ENCODE measurements at regions of chr2 and their contacts with region 1.

Region 1: DNA sequence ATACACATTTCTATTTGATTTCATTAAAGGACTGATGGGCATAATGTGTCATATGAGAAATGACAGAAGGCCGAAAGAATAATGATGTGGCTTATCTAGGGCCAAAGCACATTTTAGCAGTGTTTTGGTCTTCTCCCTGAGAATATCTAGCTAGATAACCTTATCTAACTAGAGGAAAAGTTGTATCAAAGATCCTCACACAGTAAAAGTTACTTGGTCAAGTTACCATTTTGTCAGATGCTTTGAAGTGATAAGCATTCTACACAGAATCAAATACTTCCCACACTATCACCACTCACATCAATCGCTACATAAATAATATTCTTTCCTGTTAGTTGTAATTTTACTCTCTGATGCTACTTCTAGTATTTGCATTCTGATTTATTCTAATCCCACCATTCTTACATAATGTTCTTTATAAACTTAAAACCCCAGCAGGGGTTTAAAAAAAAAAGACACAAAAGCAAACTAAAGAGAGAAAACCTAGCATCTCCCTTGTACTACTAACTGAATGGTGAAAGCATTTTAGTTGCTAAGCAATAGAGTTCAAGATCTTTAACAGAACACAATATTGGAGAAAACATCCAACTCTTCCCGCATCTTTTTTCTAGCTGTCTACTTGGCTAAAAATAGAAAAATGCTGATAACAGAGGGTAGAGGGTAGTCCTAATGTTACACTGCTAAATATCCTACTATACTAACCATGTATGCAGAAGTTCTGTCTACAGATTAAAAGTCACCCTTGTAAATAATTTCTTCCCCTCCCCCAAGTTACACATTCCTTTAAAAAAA is 8.0 kb downstream of the XPO1 start:
- DNase-seq: no peak
- ATAC-seq: no peak

Region 2: DNA sequence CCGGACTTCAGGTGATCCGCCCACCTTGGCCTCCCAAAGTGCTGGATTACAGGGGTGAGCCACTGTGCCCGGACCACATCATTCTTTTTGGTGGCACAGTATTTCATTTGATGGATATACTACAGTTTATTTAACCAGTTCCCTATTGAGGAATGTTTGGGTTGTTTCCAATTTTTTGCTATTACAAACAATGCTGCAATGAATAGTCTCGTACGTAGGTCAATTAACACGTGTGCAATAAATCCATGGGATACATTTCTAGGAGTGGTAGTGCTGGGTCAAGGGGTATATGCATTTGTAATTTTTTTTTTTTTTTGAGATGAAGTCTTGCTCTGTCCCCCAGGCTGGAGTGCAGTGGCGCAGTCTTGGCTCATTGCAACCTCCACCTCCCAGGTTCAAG is 36.4 kb after region 1 on chr2:
- intact Hi-C with region 1: no loop called
- DNase-seq: no peak
- ATAC-seq: no peak

Region 3: GRCh38 chr2:61854474-61855182 is 324.5 kb after region 1 on chr2:
- intact Hi-C with region 1: loop called in 1 of 2 experiments (anchors 10 kb)
- DNase-seq: peak; percentile 90
- ATAC-seq: peak; percentile 94 to 97

Measured in left cardiac atrium (tissue), 4 donors.